ENCODE measurements at regions of chr4 and their contacts with region 1.

Region 1: DNA sequence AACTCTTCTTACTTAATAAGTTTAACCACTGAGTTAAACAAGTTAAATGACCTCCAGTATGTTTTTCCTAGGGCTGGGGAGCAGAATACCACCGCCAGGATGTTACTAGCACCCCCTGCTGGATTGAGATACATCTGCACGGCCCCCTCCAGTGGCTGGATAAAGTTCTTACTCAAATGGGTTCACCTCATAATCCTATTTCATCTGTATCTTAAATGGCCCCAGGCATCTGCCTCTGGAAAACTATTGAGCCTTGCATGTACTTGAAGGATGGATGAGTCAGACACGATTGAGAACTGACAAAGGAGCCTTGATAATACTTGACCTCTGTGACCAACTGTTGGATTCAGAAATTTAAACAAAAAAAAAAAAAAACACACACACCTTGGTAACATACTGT is 61.5 kb upstream of the MMAA start:
- DNase-seq: peak; percentile 65
- CTCF ChIP-seq: peak; percentile 82

Region 2: GRCh38 chr4:144955104-144955503 is 602.6 kb before region 1 on chr4:
- CTCF ChIA-PET with region 1: no interaction called
- POLR2A ChIA-PET with region 1: no interaction called
- DNase-seq: no peak
- CTCF ChIP-seq: no peak

Region 3: GRCh38 chr4:145216535-145216934 is 341.2 kb before region 1 on chr4:
- CTCF ChIA-PET with region 1: interaction called, 10 read pairs
- POLR2A ChIA-PET with region 1: no interaction called
- DNase-seq: no peak
- CTCF ChIP-seq: peak; percentile 40

Region 4: GRCh38 chr4:145541346-145541745 is 16.4 kb before region 1 on chr4:
- CTCF ChIA-PET with region 1: interaction called, 15 read pairs
- POLR2A ChIA-PET with region 1: no interaction called
- DNase-seq: no peak
- CTCF ChIP-seq: no peak